PC-3 (cell line): ENCODE measurements at regions of chr2 and their contacts with region 1.

Region 1: GRCh38 chr2:99448556-99448955 is 41.3 kb downstream of the REV1 start:
- DNase-seq: peak; percentile 91
- ATAC-seq: peak; percentile 97
- H3K4me3 ChIP-seq: no peak overlapping the region
- H3K27ac ChIP-seq: peak overlapping the region; percentile 84
- H3K4me1 ChIP-seq: peaks cover 15% of the 10 kb centered on the region
- H3K27me3 ChIP-seq: no peaks in the 10 kb centered on the region
- CTCF ChIP-seq: no peak

Region 2: DNA sequence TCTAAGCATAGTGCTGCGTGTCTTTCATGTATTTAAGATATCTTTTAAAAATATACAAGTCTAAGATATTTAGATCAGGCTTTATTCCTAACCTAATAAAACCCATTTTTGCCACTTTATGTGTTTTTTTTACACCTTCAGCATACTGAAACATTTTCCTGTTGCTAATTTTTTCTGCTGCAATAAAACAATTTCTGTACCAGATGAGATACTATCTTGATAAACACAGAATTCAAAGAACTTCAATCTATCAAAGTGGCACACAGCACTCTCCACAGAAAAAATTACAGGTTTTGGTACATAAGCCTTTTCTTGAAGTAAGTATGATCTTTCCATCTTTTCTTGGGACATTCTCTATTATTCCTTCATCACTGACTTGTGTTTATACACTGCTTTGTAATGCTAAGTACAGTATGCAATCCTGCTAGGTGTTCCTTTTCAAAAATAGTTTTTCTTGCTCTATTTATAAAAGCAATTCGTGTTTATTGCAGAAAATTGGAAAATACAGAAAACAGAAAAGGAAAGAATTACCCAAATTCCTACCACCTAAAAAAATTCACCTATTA is 25.0 kb after region 1 on chr2:
- CTCF ChIA-PET with region 1: no interaction called
- POLR2A ChIA-PET with region 1: no interaction called
- intact Hi-C with region 1: loop called (anchors 1 kb)
- DNase-seq: no peak
- ATAC-seq: no peak
- H3K4me3 ChIP-seq: no peak overlapping the region
- H3K27ac ChIP-seq: peak overlapping the region; percentile 74
- H3K4me1 ChIP-seq: peaks cover 47% of the 10 kb centered on the region
- H3K27me3 ChIP-seq: no peaks in the 10 kb centered on the region
- CTCF ChIP-seq: no peak